Vagina (tissue), 2 donors: ENCODE measurements at regions of chr19 and their contacts with region 1.

Region 1: GRCh38 chr19:46025835-46026234 is 3.0 kb upstream of the PGLYRP1 start:
- DNase-seq: no peak
- H3K4me3 ChIP-seq: no peak overlapping the region
- H3K27ac ChIP-seq: no peak overlapping the region
- H3K4me1 ChIP-seq: no peaks in the 10 kb centered on the region
- H3K27me3 ChIP-seq: no peaks in the 10 kb centered on the region
- CTCF ChIP-seq: no peak
- POLR2A ChIP-seq: no peak

Region 2: DNA sequence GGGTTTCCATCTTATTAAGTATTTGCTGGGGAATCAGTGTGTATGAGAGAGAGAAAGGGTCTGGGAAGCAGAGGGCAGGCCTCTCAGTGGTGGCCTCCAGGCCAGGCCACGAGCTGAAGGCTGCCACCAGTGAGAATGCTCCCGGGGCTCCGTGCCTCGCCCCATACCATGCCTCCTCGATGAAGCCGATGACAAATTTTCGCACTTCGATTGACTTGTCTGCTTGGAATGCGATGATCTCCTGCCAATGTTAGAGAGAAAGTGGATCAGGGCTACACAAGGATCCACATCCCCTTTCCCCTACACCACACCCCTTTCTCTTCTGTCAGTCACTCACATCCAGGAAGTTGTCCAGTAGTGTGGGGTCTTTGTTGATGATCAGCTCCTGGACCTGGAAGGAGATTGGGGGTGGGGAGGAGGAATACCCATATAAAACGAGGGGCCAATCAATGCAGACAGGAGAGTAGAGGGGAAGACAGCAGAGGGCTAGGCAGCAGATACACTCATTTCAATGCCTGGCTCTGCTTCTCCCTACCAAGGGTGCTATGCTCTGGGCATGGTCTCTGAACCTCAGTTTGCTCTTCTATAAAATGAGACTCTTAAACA is 173.6 kb before region 1 on chr19:
- intact Hi-C with region 1: no loop called
- DNase-seq: peak in 1 of 2 donors; percentile 72
- H3K4me3 ChIP-seq: no peak overlapping the region
- H3K27ac ChIP-seq: no peak overlapping the region
- H3K4me1 ChIP-seq: no peaks in the 10 kb centered on the region
- H3K27me3 ChIP-seq: no peaks in the 10 kb centered on the region
- CTCF ChIP-seq: no peak
- POLR2A ChIP-seq: no peak

Region 3: GRCh38 chr19:46265217-46265828 is 239.5 kb after region 1 on chr19:
- intact Hi-C with region 1: loop called (anchors 5 kb)
- DNase-seq: no peak
- H3K4me3 ChIP-seq: no peak overlapping the region
- H3K27ac ChIP-seq: no peak overlapping the region
- H3K4me1 ChIP-seq: no peaks in the 10 kb centered on the region
- H3K27me3 ChIP-seq: no peaks in the 10 kb centered on the region
- CTCF ChIP-seq: peak; percentile 75 to 93 (median 87)
- POLR2A ChIP-seq: no peak